ENCODE measurements at regions of chr9 and their contacts with region 1.

Region 1: GRCh38 chr9:128296337-128297220 is 20.5 kb downstream of the SWI5 start:
- DNase-seq: peak; percentile 85 to 97 (median 90)
- ATAC-seq: peak; percentile 73
- H3K4me3 ChIP-seq: no peak overlapping the region
- H3K27ac ChIP-seq: peak overlapping the region; percentile 49
- H3K4me1 ChIP-seq: peaks cover 38 to 42% of the 10 kb centered on the region in 2 experiments
- H3K27me3 ChIP-seq: no peaks in the 10 kb centered on the region
- CTCF ChIP-seq: peak in 1 of 3 experiments; percentile 13; a peak in 1 of 6 replicates
- EP300 ChIP-seq: peak; percentile 69
- POLR2A ChIP-seq: no peak
- RAD21 ChIP-seq: peak; percentile 4 to 36; a peak in 1 of 4 replicates

Region 2: DNA sequence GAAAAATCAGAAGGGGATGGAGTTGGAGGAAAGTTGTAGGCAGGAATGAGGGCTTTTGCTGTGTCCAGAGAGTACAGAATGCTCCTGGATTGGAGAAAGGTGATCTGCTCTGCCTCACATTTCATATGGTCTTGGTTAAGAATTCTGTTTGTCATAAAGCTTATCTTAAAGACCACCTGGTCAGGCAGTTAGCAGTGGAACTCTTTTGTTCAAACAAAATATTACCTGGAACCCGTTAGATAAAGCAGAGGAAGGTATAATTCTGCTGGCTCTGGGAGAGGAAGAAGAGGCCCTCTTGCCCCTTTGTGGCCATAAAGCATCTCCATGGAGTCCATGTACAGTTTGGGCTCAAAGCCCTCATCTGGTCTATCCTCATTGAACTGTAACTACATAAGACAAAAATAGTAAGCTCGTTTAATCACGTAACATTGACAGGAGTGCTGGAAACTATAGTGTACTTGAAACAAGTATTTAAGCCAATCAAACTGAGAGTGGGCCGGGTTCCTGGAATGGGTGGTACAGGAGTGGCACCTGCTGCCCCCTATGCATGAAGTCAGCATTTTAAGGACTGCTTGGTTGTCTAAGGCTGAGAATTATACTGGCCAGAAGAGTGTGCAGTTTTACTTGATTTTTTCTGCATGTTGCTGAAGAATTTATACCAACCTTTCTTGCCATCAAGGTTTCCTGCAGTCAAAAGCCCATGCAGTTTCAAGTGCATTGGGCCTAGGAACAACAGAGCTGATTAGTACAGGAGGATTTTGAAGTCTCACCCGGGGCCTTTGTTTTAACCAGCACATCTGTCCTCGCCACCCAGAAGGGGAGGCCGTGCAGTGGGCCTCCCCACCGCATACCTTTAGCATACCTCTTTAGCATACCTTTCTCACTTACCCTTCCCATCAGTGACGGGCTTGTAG is 644.6 kb before region 1 on chr9:
- CTCF ChIA-PET with region 1: no interaction called
- POLR2A ChIA-PET with region 1: no interaction called
- in situ Hi-C with region 1: no loop called
- intact Hi-C with region 1: no loop called
- DNase-seq: peak; percentile 62 to 76 (median 68)
- ATAC-seq: peak; percentile 73
- H3K4me3 ChIP-seq: no peak overlapping the region
- H3K27ac ChIP-seq: peak overlapping the region; percentile 56
- H3K4me1 ChIP-seq: peaks cover 17 to 32% of the 10 kb centered on the region in 2 experiments
- H3K27me3 ChIP-seq: no peaks in the 10 kb centered on the region
- CTCF ChIP-seq: no peak
- EP300 ChIP-seq: peak; percentile 90
- POLR2A ChIP-seq: no peak
- RAD21 ChIP-seq: no peak

Region 3: GRCh38 chr9:128286440-128286839 is 10.1 kb before region 1 on chr9:
- CTCF ChIA-PET with region 1: no interaction called
- POLR2A ChIA-PET with region 1: interaction called, 33 read pairs
- in situ Hi-C with region 1: no loop called
- intact Hi-C with region 1: no loop called
- DNase-seq: no peak
- ATAC-seq: no peak
- H3K4me3 ChIP-seq: no peak overlapping the region
- H3K27ac ChIP-seq: no peak overlapping the region
- H3K4me1 ChIP-seq: peaks cover 0 to 5% of the 10 kb centered on the region in 2 experiments; a peak in 1 of 5 replicates
- H3K27me3 ChIP-seq: no peaks in the 10 kb centered on the region
- CTCF ChIP-seq: no peak
- EP300 ChIP-seq: no peak
- POLR2A ChIP-seq: no peak
- RAD21 ChIP-seq: no peak

Region 4: GRCh38 chr9:128322404-128323211 is 26.0 kb after region 1 on chr9 and contains the starts of genes COQ4 and TRUB2:
- CTCF ChIA-PET with region 1: no interaction called
- POLR2A ChIA-PET with region 1: interaction called, 4 read pairs
- in situ Hi-C with region 1: no loop called
- intact Hi-C with region 1: loop called (anchors 1 kb)
- DNase-seq: peak; percentile 98 to 100 (median 100)
- ATAC-seq: peak; percentile 95
- H3K4me3 ChIP-seq: peak within 1 kb of the TSS; percentile 67
- H3K27ac ChIP-seq: peak within 1 kb of the TSS; percentile 94
- H3K4me1 ChIP-seq: peaks cover 8 to 19% of the 10 kb centered on the region in 2 experiments
- H3K27me3 ChIP-seq: no peaks in the 10 kb centered on the region
- CTCF ChIP-seq: peak in 2 of 3 experiments; percentile 32 to 37; a peak in 4 of 6 replicates
- EP300 ChIP-seq: peak; percentile 66
- POLR2A ChIP-seq: no peak
- RAD21 ChIP-seq: peak; percentile 21 to 45
- polyA plus RNA-seq, gene COQ4: 9.1 to 11.3 TPM
- polyA plus RNA-seq, gene TRUB2: 9.3 to 24.2 TPM

Region 5: DNA sequence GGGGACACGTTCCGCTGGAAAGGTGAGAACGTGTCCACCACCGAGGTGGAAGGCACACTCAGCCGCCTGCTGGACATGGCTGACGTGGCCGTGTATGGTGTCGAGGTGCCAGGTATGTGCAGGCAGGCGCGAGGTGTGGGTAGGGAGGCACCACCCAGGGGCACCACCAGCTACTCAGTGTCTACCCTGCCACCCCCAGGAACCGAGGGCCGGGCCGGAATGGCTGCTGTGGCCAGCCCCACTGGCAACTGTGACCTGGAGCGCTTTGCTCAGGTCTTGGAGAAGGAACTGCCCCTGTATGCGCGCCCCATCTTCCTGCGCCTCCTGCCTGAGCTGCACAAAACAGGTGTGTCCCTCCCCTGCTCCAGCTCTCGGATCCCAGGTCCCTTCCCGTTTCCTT is 58.9 kb after region 1 on chr9:
- CTCF ChIA-PET with region 1: no interaction called
- POLR2A ChIA-PET with region 1: no interaction called
- in situ Hi-C with region 1: no loop called
- intact Hi-C with region 1: no loop called
- DNase-seq: no peak
- ATAC-seq: no peak
- H3K4me3 ChIP-seq: no peak overlapping the region
- H3K27ac ChIP-seq: no peak overlapping the region
- H3K4me1 ChIP-seq: peaks cover 0 to 15% of the 10 kb centered on the region in 2 experiments; a peak in 2 of 5 replicates
- H3K27me3 ChIP-seq: no peaks in the 10 kb centered on the region
- CTCF ChIP-seq: no peak
- EP300 ChIP-seq: no peak
- POLR2A ChIP-seq: no peak
- RAD21 ChIP-seq: no peak

Region 6: DNA sequence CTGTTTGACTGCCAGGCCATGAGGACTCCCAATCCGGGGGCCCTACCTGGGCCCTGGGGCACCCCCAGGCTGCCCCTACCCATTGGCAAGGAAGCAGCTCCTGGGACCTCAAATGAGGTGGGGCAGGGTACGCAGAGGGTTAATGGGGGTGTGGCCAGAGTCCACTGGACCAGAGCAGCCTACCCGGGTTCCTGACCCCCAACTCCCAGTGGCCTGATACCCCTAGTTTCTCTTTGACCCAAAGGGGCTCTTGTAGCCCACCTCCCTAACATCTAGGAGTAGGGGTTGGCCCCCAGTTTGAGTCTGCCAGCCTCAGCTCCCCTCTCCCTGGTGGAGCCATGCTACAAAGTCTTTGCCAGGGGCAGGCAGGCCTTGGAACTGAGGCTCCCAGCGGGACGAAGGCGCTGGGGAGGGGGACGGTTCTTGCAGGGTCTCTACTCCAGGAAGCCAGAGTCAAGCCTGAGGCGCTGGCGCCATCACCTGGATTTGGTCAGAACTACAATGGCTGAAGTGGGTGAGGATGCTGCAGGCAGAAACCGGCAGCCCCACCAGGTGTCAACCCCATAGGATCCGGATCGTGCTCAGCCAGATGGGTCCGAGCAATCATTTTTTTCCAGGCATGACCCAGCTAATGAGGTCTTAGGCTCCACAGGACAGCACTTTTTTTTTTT is 115.7 kb after region 1 on chr9:
- CTCF ChIA-PET with region 1: interaction called, 15 read pairs
- POLR2A ChIA-PET with region 1: no interaction called
- in situ Hi-C with region 1: no loop called
- intact Hi-C with region 1: loop called (anchors 1 kb)
- DNase-seq: peak; percentile 55 to 81 (median 68)
- ATAC-seq: peak; percentile 88
- H3K4me3 ChIP-seq: no peak overlapping the region
- H3K27ac ChIP-seq: no peak overlapping the region
- H3K4me1 ChIP-seq: peaks cover 9 to 23% of the 10 kb centered on the region in 2 experiments; a peak in 4 of 5 replicates
- H3K27me3 ChIP-seq: no peaks in the 10 kb centered on the region; a peak in 1 of 5 replicates
- CTCF ChIP-seq: peak; percentile 89 to 94 (median 91)
- EP300 ChIP-seq: no peak
- POLR2A ChIP-seq: no peak
- RAD21 ChIP-seq: peak; percentile 76 to 91

Region 7: GRCh38 chr9:128434340-128434739 is 137.8 kb after region 1 on chr9:
- CTCF ChIA-PET with region 1: no interaction called
- POLR2A ChIA-PET with region 1: no interaction called
- in situ Hi-C with region 1: no loop called
- intact Hi-C with region 1: no loop called
- DNase-seq: peak in 1 of 4 experiments; percentile 5
- ATAC-seq: no peak
- H3K4me3 ChIP-seq: no peak overlapping the region
- H3K27ac ChIP-seq: no peak overlapping the region
- H3K4me1 ChIP-seq: peaks cover 7 to 33% of the 10 kb centered on the region in 2 experiments; a peak in 4 of 5 replicates
- H3K27me3 ChIP-seq: no peaks in the 10 kb centered on the region
- CTCF ChIP-seq: no peak
- EP300 ChIP-seq: no peak
- POLR2A ChIP-seq: no peak
- RAD21 ChIP-seq: no peak

Region 8: GRCh38 chr9:129726322-129727160 is 1430.0 kb after region 1 on chr9:
- CTCF ChIA-PET with region 1: no interaction called
- POLR2A ChIA-PET with region 1: no interaction called
- in situ Hi-C with region 1: no loop called
- intact Hi-C with region 1: loop called (anchors 5 kb)
- DNase-seq: peak; percentile 88 to 98 (median 96)
- ATAC-seq: peak; percentile 97
- H3K4me3 ChIP-seq: no peak overlapping the region
- H3K27ac ChIP-seq: no peak overlapping the region
- H3K4me1 ChIP-seq: peaks cover 0 to 20% of the 10 kb centered on the region in 2 experiments; a peak in 2 of 5 replicates
- H3K27me3 ChIP-seq: peaks cover 15 to 37% of the 10 kb centered on the region in 2 experiments
- CTCF ChIP-seq: peak; percentile 97 to 100 (median 98)
- EP300 ChIP-seq: no peak
- POLR2A ChIP-seq: no peak
- RAD21 ChIP-seq: peak; percentile 97 to 99